ENCODE measurements at regions of chr11 and their contacts with region 1.

Region 1: DNA sequence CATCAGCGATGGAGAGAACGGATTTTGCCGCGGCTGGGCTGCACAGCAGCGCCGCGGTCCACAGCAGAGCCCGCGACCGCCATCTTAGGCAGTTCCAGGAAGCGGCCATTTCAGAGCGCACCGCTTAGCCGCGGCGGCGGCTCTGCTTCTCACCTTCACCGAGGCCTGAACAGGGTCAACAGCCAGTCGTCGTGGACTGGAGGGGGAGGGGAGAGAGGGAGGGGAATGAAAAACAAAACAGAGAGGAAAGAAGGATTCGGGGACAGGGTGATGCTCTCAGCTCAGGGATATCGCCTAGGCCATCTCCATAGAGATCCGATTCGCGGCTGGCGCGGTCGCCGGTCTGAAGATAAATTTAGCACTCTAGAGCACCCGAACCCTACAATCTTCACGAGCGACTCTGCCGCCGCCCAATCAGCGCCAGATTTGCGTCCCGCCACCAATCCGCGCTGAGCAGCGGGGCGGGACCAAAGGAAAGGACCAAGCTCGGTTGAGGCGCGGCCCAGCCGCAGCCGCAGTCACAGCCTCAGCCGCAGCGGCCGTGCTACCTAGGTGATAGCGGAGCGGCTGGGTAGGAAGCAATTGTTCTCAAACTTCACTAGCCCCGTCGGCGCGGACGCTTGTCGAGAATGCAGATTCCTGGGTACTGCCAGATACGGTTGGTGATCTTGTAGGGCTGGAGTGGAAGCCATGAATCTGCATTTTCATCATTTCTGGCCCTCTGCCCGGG is at the start of gene ZBED5:
- DNase-seq: peak; percentile 96
- H3K4me3 Mint-ChIP-seq: peak within 1 kb of the TSS; percentile 100
- H3K27ac Mint-ChIP-seq: peak within 1 kb of the TSS; percentile 100
- H3K4me1 Mint-ChIP-seq: peaks cover 36% of the 10 kb centered on the region
- H3K27me3 Mint-ChIP-seq: no peaks in the 10 kb centered on the region
- total RNA-seq, gene ZBED5: 39.2 and 40.3 TPM in 2 replicates

Region 2: DNA sequence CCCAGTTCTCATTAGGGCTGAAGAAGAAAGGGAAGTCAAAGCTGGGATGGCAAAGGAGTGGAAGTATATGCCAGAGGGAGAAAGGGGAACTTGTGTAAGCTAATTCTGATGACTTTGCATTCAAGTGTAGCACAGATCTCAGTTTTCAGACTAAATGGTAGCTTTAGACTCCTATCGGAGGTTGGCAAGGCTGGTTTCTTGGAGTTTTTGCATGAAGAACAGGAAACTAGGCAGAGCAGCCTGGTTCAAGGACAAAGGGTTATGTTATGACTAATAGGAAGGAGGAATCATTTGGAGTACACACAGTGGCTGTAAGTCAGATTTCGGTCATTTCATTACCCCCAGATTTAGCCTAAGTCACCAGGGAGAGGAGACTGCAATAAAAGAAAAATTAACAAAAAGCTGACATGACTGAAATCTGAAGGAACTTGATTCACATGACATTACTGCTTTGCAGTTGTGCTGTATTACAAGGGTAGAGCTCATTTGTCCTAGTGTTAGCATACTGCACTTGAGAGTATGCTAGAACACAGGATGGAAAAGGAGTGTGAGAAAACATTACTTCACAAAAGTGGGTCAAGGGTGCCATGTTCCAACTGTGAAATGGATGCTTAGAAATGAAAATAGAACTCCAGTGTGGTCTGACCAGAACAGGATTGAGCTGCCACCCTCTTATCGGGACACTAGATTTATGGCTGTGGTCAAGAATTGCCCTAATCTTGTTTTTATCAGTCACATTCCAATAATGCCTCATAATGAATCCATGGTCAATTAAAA is 529.4 kb before region 1 on chr11:
- intact Hi-C with region 1: no loop called
- DNase-seq: no peak
- H3K4me3 Mint-ChIP-seq: no peak overlapping the region
- H3K27ac Mint-ChIP-seq: no peak overlapping the region
- H3K4me1 Mint-ChIP-seq: peaks cover 4% of the 10 kb centered on the region
- H3K27me3 Mint-ChIP-seq: peaks cover 35% of the 10 kb centered on the region

Region 3: GRCh38 chr11:10750838-10751580 is 106.9 kb before region 1 on chr11 and contains the start of gene CTR9:
- intact Hi-C with region 1: loop called (anchors 1 kb)
- DNase-seq: peak; percentile 91
- H3K4me3 Mint-ChIP-seq: peak within 1 kb of the TSS; percentile 92
- H3K27ac Mint-ChIP-seq: peak within 1 kb of the TSS; percentile 86
- H3K4me1 Mint-ChIP-seq: peaks cover 32% of the 10 kb centered on the region
- H3K27me3 Mint-ChIP-seq: no peaks in the 10 kb centered on the region
- total RNA-seq, gene CTR9: 41.5 and 43.5 TPM in 2 replicates

Region 4: DNA sequence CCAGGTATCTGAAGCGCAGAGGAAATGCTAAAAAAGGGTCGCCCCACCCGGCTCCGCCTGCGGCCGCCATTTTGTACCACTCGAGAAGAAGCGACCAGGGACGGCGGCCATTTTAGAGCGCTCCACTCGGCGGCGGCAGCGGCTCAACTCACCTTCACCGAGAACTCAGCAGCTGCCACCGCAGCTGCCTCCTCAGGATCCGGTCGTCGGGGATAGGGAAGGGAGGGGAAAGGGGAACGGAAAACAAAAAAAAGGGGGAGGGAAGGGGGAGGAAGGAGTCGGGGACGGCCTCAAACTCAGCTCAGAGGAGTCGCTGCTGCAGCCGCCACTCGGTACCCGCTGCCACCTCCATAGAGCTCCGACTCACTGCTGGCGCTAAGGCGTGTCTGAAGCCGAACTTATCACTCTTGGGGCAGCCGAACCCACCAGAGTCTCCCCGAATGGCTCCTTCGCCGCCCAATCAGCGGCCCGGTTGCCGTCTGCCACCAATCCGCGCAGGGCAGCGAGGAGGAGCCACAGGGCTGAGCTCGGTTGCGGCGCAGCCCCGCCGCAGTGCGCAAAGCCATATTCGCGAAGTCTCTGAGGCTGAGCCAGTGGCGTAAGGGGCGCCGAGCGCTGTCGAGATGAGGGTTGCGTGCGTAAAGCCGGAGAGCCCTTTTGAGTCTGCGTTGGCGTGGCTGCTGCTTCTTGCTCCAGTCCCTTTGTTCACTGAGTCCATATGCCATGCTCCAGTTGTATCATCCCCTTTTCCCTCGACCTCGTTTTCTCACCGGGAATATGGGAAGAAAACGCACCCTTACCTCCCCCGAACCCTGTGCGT is 49.1 kb before region 1 on chr11 and contains the start of gene EIF4G2:
- intact Hi-C with region 1: loop called (anchors 1 kb)
- DNase-seq: peak; percentile 98
- H3K4me3 Mint-ChIP-seq: peak within 1 kb of the TSS; percentile 94
- H3K27ac Mint-ChIP-seq: peak within 1 kb of the TSS; percentile 98
- H3K4me1 Mint-ChIP-seq: peaks cover 33% of the 10 kb centered on the region
- H3K27me3 Mint-ChIP-seq: peaks cover 2% of the 10 kb centered on the region
- total RNA-seq, gene EIF4G2: 1,057 and 1,120 TPM in 2 replicates

Region 5: GRCh38 chr11:10868375-10868774 is 10.5 kb after region 1 on chr11:
- intact Hi-C with region 1: loop called (anchors 1 kb)
- DNase-seq: no peak
- H3K4me3 Mint-ChIP-seq: no peak overlapping the region
- H3K27ac Mint-ChIP-seq: no peak overlapping the region
- H3K4me1 Mint-ChIP-seq: peaks cover 20% of the 10 kb centered on the region
- H3K27me3 Mint-ChIP-seq: no peaks in the 10 kb centered on the region